Heart right ventricle (tissue), 16 donors: ENCODE measurements at regions of chr5 and their contacts with region 1.

Region 1: DNA sequence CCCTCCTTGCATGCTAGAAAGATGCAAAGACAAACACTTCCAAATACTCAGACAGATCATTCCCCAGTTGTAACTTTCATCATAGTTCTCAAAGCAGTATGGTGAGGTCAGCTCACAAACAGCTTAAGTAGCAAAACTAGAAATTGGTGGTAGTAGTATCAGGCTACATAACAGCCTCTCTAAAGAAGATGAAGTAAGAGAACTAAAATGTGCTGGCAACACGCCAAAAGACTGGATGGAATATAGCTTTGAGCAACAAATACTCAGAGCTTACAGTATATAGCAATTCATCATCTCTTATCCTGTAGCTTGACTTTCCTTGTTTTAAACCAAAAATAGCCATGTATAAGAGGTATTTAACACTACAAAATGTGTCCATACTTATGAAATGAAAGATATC is 7.5 kb downstream of the PFDN1 start:
- DNase-seq: peak in 1 of 2 donors; percentile 86
- ATAC-seq: peak; percentile 55 to 93 (median 83)
- H3K4me3 ChIP-seq: no peak overlapping the region
- H3K27ac ChIP-seq: peak overlapping the region in 8 of 10 donors; percentile 43 to 88 (median 76)
- H3K4me1 ChIP-seq: peaks cover 4 to 93% (median 86%) of the 10 kb centered on the region in 9 donors
- H3K27me3 ChIP-seq: no peaks in the 10 kb centered on the region
- CTCF ChIP-seq: no peak

Region 2: DNA sequence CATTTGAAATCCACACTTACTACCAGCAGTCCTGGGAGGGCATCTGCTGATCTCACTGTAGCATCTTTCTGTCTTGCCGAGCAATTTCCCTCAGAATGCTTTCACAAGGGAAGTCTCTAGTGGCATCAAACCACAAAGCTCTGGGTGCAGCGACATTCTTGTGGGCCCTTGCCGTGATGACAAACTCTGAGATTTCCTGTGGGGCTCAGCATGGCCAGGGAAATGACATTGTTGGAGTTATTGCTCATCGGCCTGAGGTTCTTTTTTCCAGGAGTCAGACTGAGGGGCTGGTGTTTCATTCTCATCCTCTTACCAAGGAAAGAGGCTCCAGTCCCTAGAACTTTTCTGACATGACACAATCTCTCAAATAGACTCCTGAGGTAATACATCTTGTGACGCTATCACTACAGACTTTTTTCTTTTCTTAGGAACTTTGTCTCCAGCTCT is 43.9 kb before region 1 on chr5:
- intact Hi-C with region 1: loop called in 2 of 10 experiments (anchors 5 kb)
- DNase-seq: no peak
- ATAC-seq: peak in 6 of 8 donors; percentile 12 to 50 (median 40)
- H3K4me3 ChIP-seq: no peak overlapping the region
- H3K27ac ChIP-seq: peak overlapping the region in 4 of 10 donors; percentile 1 to 76 (median 42)
- H3K4me1 ChIP-seq: peaks cover 4 to 88% (median 61%) of the 10 kb centered on the region in 9 donors
- H3K27me3 ChIP-seq: no peaks in the 10 kb centered on the region
- CTCF ChIP-seq: no peak

Region 3: GRCh38 chr5:140261403-140262171 is 33.8 kb before region 1 on chr5:
- intact Hi-C with region 1: loop called in 4 of 10 experiments (anchors 5 kb)
- DNase-seq: peak; percentile 52 to 81
- ATAC-seq: peak; percentile 90 to 97 (median 96)
- H3K4me3 ChIP-seq: peak overlapping the region in 4 of 10 donors; percentile 5 to 13 (median 8)
- H3K27ac ChIP-seq: peak overlapping the region; percentile 55 to 89 (median 75)
- H3K4me1 ChIP-seq: peaks cover 12 to 76% (median 46%) of the 10 kb centered on the region in 9 donors
- H3K27me3 ChIP-seq: no peaks in the 10 kb centered on the region
- CTCF ChIP-seq: peak in 6 of 9 donors; percentile 10 to 53 (median 36)

Region 4: GRCh38 chr5:140346348-140347101 is 51.1 kb after region 1 on chr5 and contains the start of gene HBEGF:
- intact Hi-C with region 1: loop called in 7 of 10 experiments (anchors 5 to 10 kb)
- DNase-seq: peak; percentile 84 to 88
- ATAC-seq: peak; percentile 70 to 91 (median 84)
- H3K4me3 ChIP-seq: peak within 1 kb of the TSS; percentile 78 to 97 (median 88)
- H3K27ac ChIP-seq: peak within 1 kb of the TSS; percentile 74 to 97 (median 95)
- H3K4me1 ChIP-seq: peaks cover 19 to 68% (median 60%) of the 10 kb centered on the region in 9 donors
- H3K27me3 ChIP-seq: no peaks in the 10 kb centered on the region
- CTCF ChIP-seq: peak; percentile 17 to 68 (median 47)
- total RNA-seq, gene HBEGF: 18.5 to 121 (median 33.3) TPM